Ascending aorta (tissue), 2 donors: ENCODE measurements at regions of chr11 and their contacts with region 1.

Region 1: GRCh38 chr11:7278314-7278917 is 26.7 kb downstream of the SYT9 start:
- DNase-seq: no peak
- H3K4me3 ChIP-seq: no peak overlapping the region
- H3K27ac ChIP-seq: no peak overlapping the region
- H3K4me1 ChIP-seq: no peaks in the 10 kb centered on the region
- H3K27me3 ChIP-seq: no peaks in the 10 kb centered on the region
- CTCF ChIP-seq: peak in 1 of 3 experiments; percentile 35

Region 2: DNA sequence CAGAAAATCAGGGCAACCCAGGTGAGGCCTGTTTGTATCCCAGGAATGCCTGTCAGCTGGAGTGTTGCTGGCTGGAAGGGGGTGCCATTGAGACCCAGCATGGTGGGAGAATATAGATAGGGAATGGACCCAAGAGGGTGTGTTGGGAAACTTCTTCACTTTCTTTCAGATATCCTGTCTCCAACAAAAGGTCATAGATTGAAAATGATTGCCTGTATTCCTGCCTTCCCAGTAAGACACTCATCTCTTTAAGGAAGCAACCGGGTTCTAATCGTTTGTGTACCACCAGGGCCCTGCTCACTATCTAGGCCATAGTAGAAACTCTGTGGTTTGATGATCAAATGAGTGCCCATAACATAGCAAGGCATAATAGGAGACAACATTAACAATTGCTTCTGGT is 1837.0 kb before region 1 on chr11 and contains the start of gene OR51I1:
- intact Hi-C with region 1: loop called (anchors 10 kb)
- DNase-seq: no peak
- H3K4me3 ChIP-seq: no peak within 1 kb of the TSS
- H3K27ac ChIP-seq: no peak within 1 kb of the TSS
- H3K4me1 ChIP-seq: no peaks in the 10 kb centered on the region
- H3K27me3 ChIP-seq: no peaks in the 10 kb centered on the region
- CTCF ChIP-seq: no peak
- total RNA-seq, gene OR51I1: not detected